ENCODE measurements at regions of chr2 and their contacts with region 1.

Region 1: DNA sequence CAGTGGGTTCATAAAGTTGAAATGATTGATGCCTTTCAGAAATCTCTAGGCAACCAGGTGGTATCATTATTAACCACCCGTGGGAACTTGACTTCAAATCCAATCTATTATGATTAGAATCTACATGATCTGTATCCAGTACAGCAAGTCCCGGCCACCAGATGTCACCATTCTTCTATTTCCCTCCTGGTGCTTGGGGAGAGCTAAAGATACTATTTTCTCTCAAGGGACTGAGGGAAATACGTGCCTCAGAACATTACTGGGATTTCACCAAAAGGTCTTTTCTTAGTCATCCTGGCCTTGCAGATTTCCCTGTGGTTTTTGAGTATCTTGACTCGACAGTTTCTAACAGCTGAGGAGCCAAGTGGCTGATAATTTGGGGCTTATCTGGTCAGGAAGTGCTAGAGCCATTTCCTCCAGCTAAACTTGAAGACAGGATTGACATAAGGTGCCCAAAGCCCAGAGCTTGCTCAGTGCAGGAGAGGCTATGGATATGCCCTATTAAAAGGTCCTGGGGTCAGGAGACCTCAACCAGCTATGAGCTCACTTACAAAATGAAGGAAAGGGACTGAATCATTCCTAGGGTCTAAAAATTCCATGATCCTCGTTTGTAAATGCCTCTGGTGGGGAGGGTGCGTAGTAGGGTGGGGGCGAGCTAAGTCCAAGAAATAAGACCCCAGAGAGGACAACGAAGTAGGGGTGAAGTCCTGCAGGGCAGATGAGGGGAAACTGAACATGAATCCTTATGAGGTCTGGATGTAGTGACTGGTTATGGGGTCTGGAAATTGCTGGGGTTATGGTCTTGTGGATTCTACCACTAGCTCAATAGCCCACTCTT is 135.4 kb upstream of the MGAT5 start:
- DNase-seq: peak; percentile 76 to 87 (median 80)
- H3K4me3 ChIP-seq: no peak overlapping the region
- H3K27ac ChIP-seq: peak overlapping the region in 1 of 2 donors; percentile 25
- H3K4me1 ChIP-seq: peaks cover 10% of the 10 kb centered on the region
- H3K27me3 ChIP-seq: no peaks in the 10 kb centered on the region
- CTCF ChIP-seq: peak; percentile 47 to 82 (median 75)
- EP300 ChIP-seq: no peak
- POLR2A ChIP-seq: no peak

Region 2: DNA sequence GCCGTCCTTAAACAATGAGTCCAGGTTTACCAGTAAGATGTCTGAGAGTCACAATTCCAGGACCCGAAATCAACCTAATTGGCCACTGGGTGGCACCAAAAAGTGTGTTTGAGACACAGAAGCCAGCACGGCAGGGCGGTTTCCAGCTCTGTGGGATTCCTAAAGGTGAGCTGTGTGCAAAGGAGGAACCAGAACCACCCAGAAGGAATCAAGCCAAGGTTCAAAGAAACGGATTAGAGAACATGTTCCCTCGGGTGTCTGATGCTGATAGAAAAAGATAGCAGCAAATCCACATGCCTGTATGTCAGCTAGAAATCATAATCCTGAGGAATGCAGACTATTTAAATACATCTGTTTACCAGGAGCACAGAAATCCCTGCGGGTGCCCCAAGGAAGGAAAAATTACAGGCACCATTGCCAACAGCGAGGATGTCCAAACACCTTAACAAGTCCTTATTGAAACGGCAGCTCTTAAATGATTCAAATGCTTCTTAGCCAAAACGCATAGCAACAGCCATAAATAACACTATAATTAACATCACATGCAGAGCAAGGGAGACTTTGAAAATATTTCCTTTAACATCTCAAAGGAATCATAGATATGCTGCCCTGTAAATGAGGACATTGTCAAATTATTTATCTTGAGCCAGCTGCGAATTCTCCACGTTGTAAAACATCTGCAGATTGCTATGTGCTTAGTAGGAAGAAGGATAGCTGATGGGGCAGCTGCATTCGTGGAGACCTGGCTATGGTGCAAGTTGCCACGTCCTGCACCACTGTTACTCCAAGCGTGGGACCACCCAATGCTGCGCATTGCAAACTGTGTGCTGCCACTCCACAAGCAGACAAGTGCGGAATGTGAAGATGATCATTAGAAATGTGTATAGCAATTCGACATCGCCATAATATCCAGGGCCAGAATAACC is 231.5 kb before region 1 on chr2:
- intact Hi-C with region 1: loop called in 1 of 4 experiments (anchors 5 kb)
- DNase-seq: peak; percentile 34 to 64 (median 51)
- H3K4me3 ChIP-seq: no peak overlapping the region
- H3K27ac ChIP-seq: no peak overlapping the region
- H3K4me1 ChIP-seq: no peaks in the 10 kb centered on the region
- H3K27me3 ChIP-seq: no peaks in the 10 kb centered on the region
- CTCF ChIP-seq: peak in 1 of 3 donors; percentile 20
- EP300 ChIP-seq: no peak
- POLR2A ChIP-seq: no peak

Region 3: DNA sequence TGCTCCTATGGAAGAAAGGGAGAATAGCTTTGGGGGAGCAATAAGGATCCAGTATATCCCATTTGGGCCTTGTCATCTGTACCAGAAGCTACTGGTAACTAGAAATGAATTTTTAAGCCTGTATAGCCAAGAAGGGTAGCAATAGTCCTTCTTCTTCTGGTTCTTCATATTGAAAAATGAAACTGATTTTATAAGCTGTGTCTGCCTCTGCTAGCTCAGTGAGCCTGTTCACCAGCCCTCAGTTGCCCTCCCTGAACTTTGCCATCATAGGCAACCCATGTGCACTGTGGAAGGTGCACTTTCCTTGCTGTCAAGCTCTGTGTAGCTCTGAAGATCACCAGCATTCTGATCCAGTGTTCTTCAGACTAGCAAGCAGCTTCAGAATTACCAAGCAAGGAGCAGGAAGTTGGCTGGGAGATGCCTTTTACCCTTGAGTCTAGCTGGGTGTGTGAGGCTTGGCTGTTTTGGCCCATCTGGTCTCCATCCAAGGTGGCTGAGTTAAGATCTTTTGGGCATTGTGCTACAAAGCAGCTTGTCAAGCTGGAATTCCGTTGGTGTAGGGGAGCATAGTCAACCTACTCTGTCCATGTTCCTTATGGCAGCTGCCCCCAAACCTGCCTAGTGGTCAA is 79.6 kb after region 1 on chr2:
- intact Hi-C with region 1: no loop called
- DNase-seq: no peak
- H3K4me3 ChIP-seq: no peak overlapping the region
- H3K27ac ChIP-seq: no peak overlapping the region
- H3K4me1 ChIP-seq: peaks cover 10% of the 10 kb centered on the region
- H3K27me3 ChIP-seq: no peaks in the 10 kb centered on the region
- CTCF ChIP-seq: no peak
- EP300 ChIP-seq: no peak
- POLR2A ChIP-seq: no peak

Region 4: DNA sequence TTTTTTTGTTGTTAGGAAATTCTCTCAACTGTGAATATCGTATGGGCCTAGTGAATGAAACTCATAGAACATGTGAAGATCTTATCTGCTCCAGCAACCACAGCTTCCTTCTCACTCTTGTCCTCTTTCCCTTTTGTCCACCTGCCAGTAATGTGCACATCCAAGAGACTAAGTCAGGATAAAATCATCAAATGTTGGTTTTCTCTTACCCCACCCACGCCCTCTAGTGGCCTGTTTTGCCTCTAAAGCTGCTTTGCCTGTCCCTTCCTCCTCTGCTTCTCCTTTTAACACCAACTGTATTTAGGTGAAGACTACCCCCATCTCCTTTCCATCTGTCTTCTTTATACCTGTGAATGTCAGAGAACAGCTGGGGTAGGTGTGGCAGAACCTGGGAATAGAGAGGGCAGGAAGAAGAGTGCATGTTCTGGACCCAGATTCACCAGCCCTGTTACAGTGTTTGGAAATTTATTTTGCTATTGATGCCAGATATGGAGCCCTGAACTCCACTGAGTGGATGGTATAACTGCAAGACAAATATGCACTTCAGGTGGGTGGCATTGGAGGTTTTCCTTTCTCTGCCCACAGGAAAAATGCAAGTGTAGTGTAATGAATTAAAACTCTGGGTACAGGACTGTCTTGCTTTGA is 127.0 kb after region 1 on chr2:
- intact Hi-C with region 1: loop called (anchors 5 to 10 kb)
- DNase-seq: peak; percentile 62 to 77 (median 70)
- H3K4me3 ChIP-seq: no peak overlapping the region
- H3K27ac ChIP-seq: no peak overlapping the region
- H3K4me1 ChIP-seq: peaks cover 5% of the 10 kb centered on the region
- H3K27me3 ChIP-seq: no peaks in the 10 kb centered on the region
- CTCF ChIP-seq: peak; percentile 19 to 59 (median 41)
- EP300 ChIP-seq: no peak
- POLR2A ChIP-seq: no peak

Region 5: DNA sequence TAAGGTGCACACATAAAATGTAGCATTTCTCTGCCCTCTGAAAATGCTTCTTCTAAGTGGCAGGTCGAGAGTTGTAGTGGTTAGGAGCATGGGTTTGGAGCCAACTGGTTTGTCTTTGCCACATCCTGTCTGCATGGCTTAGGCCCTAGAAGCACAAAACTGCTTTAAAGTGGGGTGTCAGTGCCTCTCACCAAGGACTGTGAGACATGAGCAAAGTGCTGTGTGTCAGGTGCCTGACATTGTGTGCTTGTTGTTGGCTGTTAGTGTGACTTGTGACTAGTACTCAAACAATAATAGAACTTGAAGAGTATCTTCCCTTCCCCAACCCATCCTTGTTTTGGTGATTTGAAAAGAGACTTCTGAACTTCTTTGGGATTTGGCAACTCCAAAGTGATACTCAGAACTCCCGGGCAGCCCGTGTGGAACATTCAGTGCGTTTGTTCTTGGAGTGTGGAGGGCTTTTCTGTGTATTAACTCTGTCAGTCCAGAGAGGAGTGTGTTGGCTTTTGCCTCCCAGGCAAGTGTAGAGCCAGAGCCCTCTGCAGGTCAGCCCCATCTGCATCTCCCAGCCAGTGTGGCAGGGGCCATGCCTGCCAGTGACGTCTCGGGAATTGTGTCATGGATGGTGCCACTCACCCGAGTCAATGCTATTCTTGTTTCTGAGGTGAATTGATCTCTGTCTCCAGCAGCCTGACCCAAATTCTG is 140.3 kb after region 1 on chr2:
- intact Hi-C with region 1: loop called in 1 of 4 experiments (anchors 10 kb)
- DNase-seq: peak in 3 of 5 donors; percentile 21 to 57 (median 23)
- H3K4me3 ChIP-seq: no peak overlapping the region
- H3K27ac ChIP-seq: no peak overlapping the region
- H3K4me1 ChIP-seq: peaks cover 31% of the 10 kb centered on the region
- H3K27me3 ChIP-seq: no peaks in the 10 kb centered on the region
- CTCF ChIP-seq: no peak
- EP300 ChIP-seq: no peak
- POLR2A ChIP-seq: no peak

Region 6: GRCh38 chr2:134375935-134376334 is 257.4 kb after region 1 on chr2:
- intact Hi-C with region 1: loop called in 1 of 4 experiments (anchors 5 kb)
- DNase-seq: peak; percentile 36 to 64 (median 60)
- H3K4me3 ChIP-seq: no peak overlapping the region
- H3K27ac ChIP-seq: no peak overlapping the region
- H3K4me1 ChIP-seq: peaks cover 24% of the 10 kb centered on the region
- H3K27me3 ChIP-seq: no peaks in the 10 kb centered on the region
- CTCF ChIP-seq: no peak
- EP300 ChIP-seq: no peak
- POLR2A ChIP-seq: no peak

Region 7: DNA sequence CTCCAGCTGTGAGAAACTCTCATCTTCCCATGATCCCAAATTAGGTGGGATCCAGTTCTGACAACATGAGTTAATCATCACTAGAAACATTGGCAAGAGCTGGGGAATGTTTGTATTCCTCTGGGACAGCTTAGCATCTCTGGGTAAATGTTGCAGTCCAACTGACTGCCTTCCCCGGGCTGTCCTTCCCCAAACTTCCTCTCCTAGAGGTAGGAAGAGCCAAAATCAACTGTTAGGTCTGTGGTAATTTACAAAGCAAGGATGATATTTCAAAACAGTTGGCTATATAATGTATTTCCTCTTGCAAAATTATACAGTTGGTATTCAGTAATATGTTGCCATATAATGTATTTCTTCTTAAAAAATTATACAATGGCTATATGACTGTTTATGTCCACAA is 283.9 kb after region 1 on chr2:
- intact Hi-C with region 1: loop called in 1 of 4 experiments (anchors 10 kb)
- DNase-seq: peak in 1 of 5 donors; percentile 37
- H3K4me3 ChIP-seq: no peak overlapping the region
- H3K27ac ChIP-seq: peak overlapping the region in 1 of 2 donors; percentile 16
- H3K4me1 ChIP-seq: peaks cover 3% of the 10 kb centered on the region
- H3K27me3 ChIP-seq: no peaks in the 10 kb centered on the region
- CTCF ChIP-seq: no peak
- EP300 ChIP-seq: no peak
- POLR2A ChIP-seq: no peak

Region 8: DNA sequence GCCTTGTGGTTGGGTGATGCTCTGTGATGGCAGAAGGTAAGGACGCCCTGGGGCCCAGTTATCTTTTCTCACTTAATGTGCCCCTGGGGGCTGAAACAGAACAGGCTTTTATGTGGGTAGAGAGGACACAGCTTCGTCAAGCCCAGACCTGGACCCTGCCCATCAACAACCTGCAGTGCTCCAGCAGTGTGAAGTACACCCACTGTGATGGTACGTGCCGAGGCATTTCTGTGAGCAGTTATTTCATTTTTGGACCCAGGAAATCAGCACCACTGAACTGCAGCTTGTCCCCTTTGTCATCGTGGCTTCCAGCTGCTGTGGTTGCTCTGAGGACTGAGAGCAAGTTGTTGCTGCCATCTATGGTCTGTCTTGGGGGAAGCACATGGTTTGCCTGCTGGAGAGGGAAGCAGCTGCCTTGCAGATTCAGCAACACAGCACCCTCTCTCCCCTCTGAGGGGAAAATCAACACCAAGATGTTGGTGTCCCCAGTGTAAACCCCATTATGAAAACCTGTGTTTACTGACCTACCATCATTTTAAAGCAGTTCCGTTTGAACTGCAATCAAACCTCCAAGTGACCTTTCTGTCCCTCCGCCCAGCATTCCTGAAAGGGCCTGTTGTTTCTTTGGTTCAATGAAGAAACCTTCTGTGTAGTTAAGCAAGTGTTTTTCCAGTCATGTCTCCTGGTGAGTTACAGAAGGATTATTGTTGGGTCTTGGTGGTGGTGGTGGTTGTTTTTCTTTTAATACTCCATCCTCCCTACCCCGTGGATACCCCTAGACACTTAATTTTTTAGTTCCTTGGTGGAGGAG is 293.5 kb after region 1 on chr2:
- intact Hi-C with region 1: loop called (anchors 5 to 10 kb)
- DNase-seq: peak; percentile 64 to 73 (median 64)
- H3K4me3 ChIP-seq: no peak overlapping the region
- H3K27ac ChIP-seq: no peak overlapping the region
- H3K4me1 ChIP-seq: no peaks in the 10 kb centered on the region
- H3K27me3 ChIP-seq: no peaks in the 10 kb centered on the region
- CTCF ChIP-seq: peak; percentile 35 to 63 (median 62)
- EP300 ChIP-seq: no peak
- POLR2A ChIP-seq: no peak

Measured in ovary (tissue), 10 donors.